ENCODE measurements at regions of chr15 and their contacts with region 1.

Region 1: GRCh38 chr15:64010719-64011118 is 35.6 kb downstream of the DAPK2 start:
- DNase-seq: peak; percentile 62
- ATAC-seq: peak; percentile 59
- H3K4me3 ChIP-seq: no peak overlapping the region
- H3K27ac ChIP-seq: no peak overlapping the region
- H3K4me1 ChIP-seq: peaks cover 2% of the 10 kb centered on the region; the same call in 1 of the 2 replicates
- H3K27me3 ChIP-seq: peaks cover 27% of the 10 kb centered on the region
- CTCF ChIP-seq: no peak
- POLR2A ChIP-seq: no peak
- RAD21 ChIP-seq: no peak

Region 2: DNA sequence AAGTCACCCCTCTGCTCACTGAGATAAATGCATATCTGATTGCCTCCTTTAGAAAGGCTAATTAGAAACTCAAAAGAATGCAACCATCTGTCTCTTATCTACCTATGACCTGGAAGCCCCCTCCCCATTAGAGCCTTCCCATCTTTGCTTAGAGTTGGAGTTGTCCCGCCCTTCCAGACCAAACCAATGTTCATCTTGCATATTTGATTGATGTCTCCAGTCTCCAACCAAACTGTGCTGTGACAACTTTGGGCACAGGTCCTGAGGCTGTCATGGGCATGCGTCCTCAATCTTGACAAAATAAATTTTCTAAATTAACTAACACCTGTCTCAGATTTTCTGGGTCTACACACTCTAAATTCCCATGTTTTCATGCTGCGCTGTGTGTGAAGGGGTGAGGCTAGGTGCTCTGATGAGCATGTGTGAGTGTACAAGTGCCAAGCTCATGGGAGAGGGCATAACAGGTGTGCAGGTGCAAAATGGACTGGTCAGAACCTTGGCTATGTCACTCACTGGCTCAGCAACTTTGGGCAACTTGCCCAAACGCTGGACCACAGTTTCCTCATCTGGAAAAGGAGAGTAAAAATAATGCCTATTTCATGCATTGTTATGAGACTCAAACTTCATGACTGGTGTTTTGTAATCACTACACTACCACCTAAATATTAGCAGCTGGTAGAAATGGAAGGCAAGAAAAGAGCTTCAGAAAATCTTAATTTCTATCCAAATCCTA is 28.3 kb after region 1 on chr15:
- CTCF ChIA-PET with region 1: no interaction called
- POLR2A ChIA-PET with region 1: no interaction called
- dilution Hi-C with region 1: no loop called
- in situ Hi-C with region 1: no loop called
- intact Hi-C with region 1: loop called (anchors 1 kb)
- DNase-seq: no peak
- ATAC-seq: no peak
- H3K4me3 ChIP-seq: no peak overlapping the region
- H3K27ac ChIP-seq: no peak overlapping the region
- H3K4me1 ChIP-seq: no peaks in the 10 kb centered on the region
- H3K27me3 ChIP-seq: peaks cover 12% of the 10 kb centered on the region
- CTCF ChIP-seq: no peak
- POLR2A ChIP-seq: no peak
- RAD21 ChIP-seq: no peak

Region 3: GRCh38 chr15:64263567-64263966 is 252.8 kb after region 1 on chr15:
- CTCF ChIA-PET with region 1: no interaction called
- POLR2A ChIA-PET with region 1: no interaction called
- dilution Hi-C with region 1: no loop called
- in situ Hi-C with region 1: no loop called
- intact Hi-C with region 1: no loop called
- DNase-seq: no peak
- ATAC-seq: no peak
- H3K4me3 ChIP-seq: no peak overlapping the region
- H3K27ac ChIP-seq: no peak overlapping the region
- H3K4me1 ChIP-seq: no peaks in the 10 kb centered on the region
- H3K27me3 ChIP-seq: no peaks in the 10 kb centered on the region
- CTCF ChIP-seq: no peak
- POLR2A ChIP-seq: no peak
- RAD21 ChIP-seq: no peak